Dorsolateral prefrontal cortex (tissue), 120 donors: ENCODE measurements at regions of chr11 and their contacts with region 1.

Region 1: DNA sequence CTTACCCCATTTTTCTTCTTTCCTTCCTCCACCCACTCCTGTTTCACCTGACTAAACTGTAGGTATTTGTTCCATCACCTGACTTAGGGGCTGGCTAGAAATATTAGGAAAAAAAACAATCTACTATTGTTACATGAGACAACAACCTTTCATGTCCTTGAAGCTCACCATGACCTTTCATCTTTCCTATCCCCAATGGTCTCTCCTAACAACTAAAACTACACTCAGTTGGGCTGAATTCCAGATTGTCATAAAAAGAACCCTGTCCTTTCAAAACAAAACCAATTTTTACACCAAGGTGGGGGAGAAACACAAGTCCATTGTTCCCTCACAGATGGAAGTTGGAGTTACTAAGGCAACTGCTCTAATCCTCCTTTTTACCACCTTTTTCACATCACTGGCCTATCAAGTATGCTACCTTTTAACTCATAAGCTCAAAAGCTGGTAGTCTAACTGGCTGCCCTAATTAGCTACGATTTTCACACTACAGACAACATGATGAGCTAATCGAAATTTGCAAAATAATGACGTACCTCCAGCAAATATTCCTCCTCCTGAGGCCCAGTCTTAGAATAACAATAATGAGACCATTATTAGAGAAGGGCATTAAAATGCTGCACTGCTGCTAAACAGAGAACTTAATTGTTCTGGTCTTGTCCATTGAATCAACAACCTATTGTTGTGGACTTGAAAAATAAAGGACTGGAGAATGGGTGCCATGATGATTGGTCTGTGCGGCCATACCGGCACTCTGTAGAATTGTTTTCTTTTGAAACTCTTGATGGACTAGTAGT is 46.5 kb upstream of the SOX6 start:
- DNase-seq: peak in 3 of 10 donors; percentile 7 to 41 (median 30)
- H3K4me3 ChIP-seq: peak overlapping the region in 21 of 59 donors; percentile 0 to 50 (median 13)
- H3K27ac ChIP-seq: peak overlapping the region in 44 of 59 donors; percentile 4 to 85 (median 52)
- H3K27me3 ChIP-seq: peaks cover 0 to 15% (median 0%) of the 10 kb centered on the region in 45 donors
- CTCF ChIP-seq: peak in 5 of 56 donors; percentile 11 to 34 (median 19)

Region 2: DNA sequence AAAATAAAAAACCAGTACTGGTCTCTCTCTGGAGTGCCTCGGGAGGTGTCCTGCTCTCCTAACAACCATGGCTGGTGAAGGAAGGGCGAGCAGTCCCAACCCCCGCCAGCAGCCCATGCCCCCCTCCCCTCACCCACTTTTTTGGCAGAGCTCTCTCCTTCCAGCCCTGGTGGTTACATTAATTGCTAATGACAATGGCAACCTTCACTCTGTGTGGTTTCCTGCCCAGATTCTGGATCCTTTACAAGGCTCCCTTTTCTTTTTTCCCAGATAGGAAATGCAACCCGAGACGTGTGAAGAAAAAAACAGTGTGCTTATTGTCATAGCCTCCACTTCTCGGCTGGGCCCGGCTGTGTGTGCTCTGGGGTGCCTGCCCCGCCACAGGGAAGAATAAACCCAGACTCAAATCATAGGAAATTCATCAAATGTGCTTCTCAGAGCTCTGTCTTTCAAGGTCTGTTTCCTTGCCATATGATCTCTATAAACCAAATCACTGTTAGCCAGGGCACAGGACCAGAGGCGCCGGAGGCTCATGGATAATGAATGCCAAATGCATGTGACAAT is 559.5 kb before region 1 on chr11:
- intact Hi-C with region 1: loop called in 1 of 2 experiments (anchors 5 kb)
- DNase-seq: peak in 5 of 10 donors; percentile 23 to 53 (median 47)
- H3K4me3 ChIP-seq: peak overlapping the region in 1 of 59 donors; percentile 35
- H3K27ac ChIP-seq: peak overlapping the region in 42 of 59 donors; percentile 15 to 80 (median 52)
- H3K27me3 ChIP-seq: peaks cover 0 to 2% (median 0%) of the 10 kb centered on the region in 45 donors
- CTCF ChIP-seq: peak in 6 of 56 donors; percentile 9 to 17 (median 10)

Region 3: DNA sequence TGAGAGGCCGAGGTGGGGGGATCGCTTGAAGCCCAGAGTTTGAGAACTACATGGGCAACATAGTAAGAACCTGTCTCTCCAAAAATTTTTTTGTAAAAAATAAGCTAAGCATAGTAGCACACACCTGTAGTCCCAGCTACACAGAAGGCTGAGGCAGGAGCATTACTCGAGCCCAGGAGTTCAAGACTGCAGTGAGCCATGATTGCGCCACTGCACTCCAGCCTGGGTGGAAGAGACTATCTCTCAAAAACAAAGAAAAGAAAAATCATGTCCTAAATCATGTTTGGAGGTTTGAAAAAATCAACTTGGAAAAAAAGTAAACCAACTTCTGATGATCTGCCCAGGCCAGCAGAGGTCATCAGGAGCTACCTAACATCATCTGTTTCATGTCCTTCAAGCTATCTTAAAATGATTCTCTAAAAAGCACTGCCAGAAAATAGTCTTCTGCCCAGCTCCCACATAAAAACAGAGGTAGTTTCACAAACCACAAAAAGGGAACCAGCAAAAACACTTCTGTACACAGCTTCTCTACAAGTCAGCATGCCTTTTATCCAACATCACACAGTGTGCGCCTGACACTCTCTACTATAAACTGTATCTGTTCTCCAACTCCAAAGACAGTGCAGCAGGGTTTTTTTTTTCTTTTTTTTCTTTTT is 211.5 kb before region 1 on chr11:
- intact Hi-C with region 1: loop called in 1 of 2 experiments (anchors 10 kb)
- DNase-seq: no peak
- H3K4me3 ChIP-seq: no peak overlapping the region
- H3K27ac ChIP-seq: no peak overlapping the region
- H3K27me3 ChIP-seq: peaks cover 0 to 59% (median 8%) of the 10 kb centered on the region in 45 donors
- CTCF ChIP-seq: peak in 11 of 56 donors; percentile 7 to 26 (median 18)

Region 4: DNA sequence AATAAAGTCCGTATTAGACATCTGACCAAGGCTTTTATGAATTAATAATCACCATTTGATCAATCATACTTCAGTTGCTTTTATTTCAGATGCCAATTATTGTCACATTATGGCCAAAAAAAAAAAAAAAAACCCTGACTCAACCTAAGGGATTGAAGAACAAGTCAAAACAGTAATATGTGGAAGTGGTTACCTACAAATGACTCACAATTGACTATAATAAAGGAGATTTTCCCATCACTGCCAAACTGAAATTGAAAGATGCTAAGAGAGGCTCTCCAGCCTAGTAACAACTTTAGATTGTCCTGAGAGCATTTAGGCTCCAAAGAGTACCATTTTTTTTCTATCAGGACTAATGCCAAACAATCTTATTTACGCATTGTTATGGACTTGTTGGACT is 81.7 kb before region 1 on chr11:
- intact Hi-C with region 1: no loop called
- DNase-seq: no peak
- H3K4me3 ChIP-seq: no peak overlapping the region
- H3K27ac ChIP-seq: no peak overlapping the region
- H3K27me3 ChIP-seq: peaks cover 0 to 9% (median 0%) of the 10 kb centered on the region in 45 donors
- CTCF ChIP-seq: no peak

Region 5: GRCh38 chr11:16356057-16356760 is 46.6 kb before region 1 on chr11 and contains the start of gene SOX6:
- intact Hi-C with region 1: loop called (anchors 2 to 10 kb)
- DNase-seq: peak in 2 of 10 donors; percentile 5 to 16
- H3K4me3 ChIP-seq: peak within 1 kb of the TSS in 22 of 59 donors; percentile 0 to 44 (median 8)
- H3K27ac ChIP-seq: peak within 1 kb of the TSS in 55 of 59 donors; percentile 4 to 82 (median 65)
- H3K27me3 ChIP-seq: peaks cover 0 to 5% (median 0%) of the 10 kb centered on the region in 45 donors
- CTCF ChIP-seq: peak in 4 of 56 donors; percentile 13 to 27 (median 18)
- total RNA-seq, gene SOX6: 19.1 to 75.9 (median 33.1) TPM

Region 6: GRCh38 chr11:16430674-16431073 is 27.8 kb after region 1 on chr11:
- intact Hi-C with region 1: no loop called
- DNase-seq: no peak
- H3K4me3 ChIP-seq: no peak overlapping the region
- H3K27ac ChIP-seq: no peak overlapping the region
- H3K27me3 ChIP-seq: no peaks in the 10 kb centered on the region
- CTCF ChIP-seq: no peak

Region 7: GRCh38 chr11:16632295-16633200 is 229.7 kb after region 1 on chr11:
- intact Hi-C with region 1: no loop called
- DNase-seq: no peak
- H3K4me3 ChIP-seq: no peak overlapping the region
- H3K27ac ChIP-seq: no peak overlapping the region
- H3K27me3 ChIP-seq: peaks cover 0 to 11% (median 0%) of the 10 kb centered on the region in 45 donors
- CTCF ChIP-seq: peak in 4 of 56 donors; percentile 10 to 20 (median 14)